Right lobe of liver (tissue), 6 donors: ENCODE measurements at regions of chr1 and their contacts with region 1.

Region 1: GRCh38 chr1:13960375-13960987 is 260.5 kb downstream of the PRDM2 start:
- DNase-seq: peak; percentile 43 to 67 (median 64)
- ATAC-seq: peak; percentile 86 to 92 (median 88)
- H3K4me3 ChIP-seq: no peak overlapping the region
- H3K27ac ChIP-seq: no peak overlapping the region
- H3K4me1 ChIP-seq: no peaks in the 10 kb centered on the region
- H3K27me3 ChIP-seq: no peaks in the 10 kb centered on the region
- CTCF ChIP-seq: peak; percentile 90 to 98 (median 94)
- POLR2A ChIP-seq: no peak

Region 2: DNA sequence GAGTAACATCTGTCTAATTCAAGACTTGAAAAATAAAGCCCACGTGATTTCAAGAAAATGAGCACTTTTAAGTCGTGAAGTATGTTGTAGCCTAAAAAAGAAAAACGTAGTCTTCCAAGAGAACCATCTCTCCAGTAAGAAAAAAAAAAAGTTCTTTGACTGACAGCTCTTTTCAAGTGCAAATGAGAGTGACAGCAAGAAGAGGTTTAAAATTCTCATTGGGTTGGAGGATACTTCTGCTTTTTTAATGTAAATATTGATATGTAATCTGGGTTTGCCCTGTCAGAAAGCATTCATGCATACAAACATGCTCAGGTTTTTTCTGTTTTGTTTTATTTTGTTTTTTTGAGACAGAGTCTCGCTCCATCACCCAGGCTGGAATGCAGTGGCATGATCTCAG is 292.8 kb before region 1 on chr1:
- intact Hi-C with region 1: loop called (anchors 5 kb)
- DNase-seq: no peak
- ATAC-seq: no peak
- H3K4me3 ChIP-seq: no peak overlapping the region
- H3K27ac ChIP-seq: no peak overlapping the region
- H3K4me1 ChIP-seq: no peaks in the 10 kb centered on the region
- H3K27me3 ChIP-seq: no peaks in the 10 kb centered on the region
- CTCF ChIP-seq: no peak
- POLR2A ChIP-seq: no peak

Region 3: DNA sequence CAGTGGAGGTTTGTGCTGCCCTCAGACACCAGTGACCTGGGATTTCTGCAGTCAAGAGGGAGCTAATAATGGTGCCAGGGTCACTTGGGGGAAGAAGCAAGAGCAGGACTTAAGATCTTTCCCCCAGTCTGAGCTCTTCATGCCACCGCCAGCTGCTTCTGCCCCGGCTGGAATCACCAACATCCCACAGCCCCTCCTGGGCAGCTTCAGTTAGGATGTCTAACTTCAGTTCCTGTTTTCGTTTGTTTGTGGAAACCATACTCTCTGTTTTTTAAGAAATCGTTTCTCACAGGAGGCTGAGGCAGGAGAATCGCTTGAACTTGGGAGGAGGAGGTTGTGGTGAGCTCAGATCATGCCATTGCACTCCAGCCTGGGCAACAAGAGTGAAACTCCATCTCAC is 286.1 kb before region 1 on chr1:
- intact Hi-C with region 1: loop called (anchors 5 kb)
- DNase-seq: no peak
- ATAC-seq: no peak
- H3K4me3 ChIP-seq: no peak overlapping the region
- H3K27ac ChIP-seq: no peak overlapping the region
- H3K4me1 ChIP-seq: no peaks in the 10 kb centered on the region
- H3K27me3 ChIP-seq: no peaks in the 10 kb centered on the region
- CTCF ChIP-seq: no peak
- POLR2A ChIP-seq: no peak

Region 4: GRCh38 chr1:13764588-13765332 is 195.7 kb before region 1 on chr1:
- intact Hi-C with region 1: no loop called
- DNase-seq: no peak
- ATAC-seq: no peak
- H3K4me3 ChIP-seq: no peak overlapping the region
- H3K27ac ChIP-seq: no peak overlapping the region
- H3K4me1 ChIP-seq: peaks cover 0 to 11% (median 5%) of the 10 kb centered on the region in 4 donors
- H3K27me3 ChIP-seq: no peaks in the 10 kb centered on the region
- CTCF ChIP-seq: no peak
- POLR2A ChIP-seq: no peak